ENCODE measurements at regions of chr4 and their contacts with region 1.

Region 1: GRCh38 chr4:83252782-83253405 is 31.7 kb downstream of the COQ2 start:
- DNase-seq: peak; percentile 81
- H3K4me3 ChIP-seq: no peak overlapping the region
- H3K27ac ChIP-seq: no peak overlapping the region
- H3K4me1 ChIP-seq: peaks cover 32% of the 10 kb centered on the region
- H3K27me3 ChIP-seq: no peaks in the 10 kb centered on the region
- CTCF ChIP-seq: peak; percentile 74 to 84
- POLR2A ChIP-seq: no peak

Region 2: GRCh38 chr4:82739316-82740179 is 513.3 kb before region 1 on chr4:
- CTCF ChIA-PET with region 1: no interaction called
- POLR2A ChIA-PET with region 1: no interaction called
- dilution Hi-C with region 1: no loop called
- intact Hi-C with region 1: no loop called
- DNase-seq: peak; percentile 82
- H3K4me3 ChIP-seq: no peak overlapping the region
- H3K27ac ChIP-seq: no peak overlapping the region
- H3K4me1 ChIP-seq: no peaks in the 10 kb centered on the region
- H3K27me3 ChIP-seq: no peaks in the 10 kb centered on the region
- CTCF ChIP-seq: peak; percentile 99 to 100
- POLR2A ChIP-seq: no peak

Region 3: DNA sequence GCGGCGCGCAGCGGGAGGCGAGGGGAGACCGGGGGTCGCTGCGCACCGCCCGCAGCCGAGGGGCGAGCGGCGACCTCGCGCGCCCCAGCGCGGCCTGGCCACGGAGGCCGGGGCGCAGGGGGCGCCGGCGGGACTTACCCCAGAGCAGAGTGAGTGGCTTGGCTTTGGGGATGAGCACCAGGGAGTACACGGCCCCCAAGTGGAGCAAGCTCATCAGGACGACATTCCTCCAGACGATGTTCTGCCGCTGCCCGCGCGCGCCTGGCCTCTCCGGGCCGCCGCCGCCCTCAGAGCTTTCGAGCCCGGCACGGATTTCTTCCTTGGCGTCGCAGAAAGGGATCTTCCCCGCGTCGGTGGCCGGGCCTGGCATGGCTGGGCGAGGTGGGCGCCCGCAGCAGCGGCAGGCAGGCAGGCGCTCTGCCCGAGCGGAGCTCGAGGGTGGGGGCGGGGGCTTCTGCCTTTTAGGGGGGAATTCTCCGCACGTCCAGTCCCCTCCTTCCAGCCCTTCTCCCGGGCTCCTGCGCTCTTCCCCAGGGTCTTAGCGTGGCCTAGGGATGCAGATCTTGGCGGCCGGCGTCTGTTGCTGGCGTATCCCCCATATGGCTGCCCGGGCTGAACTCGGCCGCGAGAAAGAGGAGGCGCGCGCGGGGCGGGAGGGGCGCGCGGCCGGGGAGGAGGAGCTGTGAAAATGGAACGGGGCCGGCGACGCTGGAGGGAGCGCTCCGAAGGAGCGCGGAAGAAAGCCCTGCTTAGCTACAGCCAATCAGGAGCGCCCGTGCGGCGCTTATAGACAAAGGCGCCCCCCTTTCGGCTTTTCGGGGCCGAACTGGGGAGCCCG is 454.5 kb before region 1 on chr4 and contains the start of gene SCD5:
- CTCF ChIA-PET with region 1: no interaction called
- POLR2A ChIA-PET with region 1: no interaction called
- dilution Hi-C with region 1: no loop called
- intact Hi-C with region 1: loop called (anchors 10 kb)
- DNase-seq: peak; percentile 76
- H3K4me3 ChIP-seq: peak within 1 kb of the TSS; percentile 79 to 91 (median 82)
- H3K27ac ChIP-seq: peak within 1 kb of the TSS; percentile 8
- H3K4me1 ChIP-seq: peaks cover 18% of the 10 kb centered on the region
- H3K27me3 ChIP-seq: peaks cover 0 to 3% of the 10 kb centered on the region in 2 experiments
- CTCF ChIP-seq: no peak
- POLR2A ChIP-seq: no peak
- total RNA-seq, gene SCD5: 35.8 and 38.4 TPM in 2 replicates

Region 4: GRCh38 chr4:83054928-83055327 is 198.0 kb before region 1 on chr4:
- CTCF ChIA-PET with region 1: interaction called, 10 read pairs
- POLR2A ChIA-PET with region 1: no interaction called
- dilution Hi-C with region 1: no loop called
- intact Hi-C with region 1: loop called (anchors 2 kb)
- DNase-seq: peak; percentile 40
- H3K4me3 ChIP-seq: no peak overlapping the region
- H3K27ac ChIP-seq: no peak overlapping the region
- H3K4me1 ChIP-seq: no peaks in the 10 kb centered on the region
- H3K27me3 ChIP-seq: no peaks in the 10 kb centered on the region
- CTCF ChIP-seq: peak; percentile 11 to 17
- POLR2A ChIP-seq: no peak

Region 5: GRCh38 chr4:83110223-83110945 is 142.5 kb before region 1 on chr4:
- CTCF ChIA-PET with region 1: interaction called, 27 read pairs
- POLR2A ChIA-PET with region 1: no interaction called
- dilution Hi-C with region 1: no loop called
- intact Hi-C with region 1: loop called (anchors 1 kb)
- DNase-seq: peak; percentile 86
- H3K4me3 ChIP-seq: peak overlapping the region; percentile 48 to 78 (median 70)
- H3K27ac ChIP-seq: peak overlapping the region; percentile 71
- H3K4me1 ChIP-seq: peaks cover 13% of the 10 kb centered on the region
- H3K27me3 ChIP-seq: no peaks in the 10 kb centered on the region
- CTCF ChIP-seq: peak; percentile 72 to 87
- POLR2A ChIP-seq: peak; percentile 31

Region 6: DNA sequence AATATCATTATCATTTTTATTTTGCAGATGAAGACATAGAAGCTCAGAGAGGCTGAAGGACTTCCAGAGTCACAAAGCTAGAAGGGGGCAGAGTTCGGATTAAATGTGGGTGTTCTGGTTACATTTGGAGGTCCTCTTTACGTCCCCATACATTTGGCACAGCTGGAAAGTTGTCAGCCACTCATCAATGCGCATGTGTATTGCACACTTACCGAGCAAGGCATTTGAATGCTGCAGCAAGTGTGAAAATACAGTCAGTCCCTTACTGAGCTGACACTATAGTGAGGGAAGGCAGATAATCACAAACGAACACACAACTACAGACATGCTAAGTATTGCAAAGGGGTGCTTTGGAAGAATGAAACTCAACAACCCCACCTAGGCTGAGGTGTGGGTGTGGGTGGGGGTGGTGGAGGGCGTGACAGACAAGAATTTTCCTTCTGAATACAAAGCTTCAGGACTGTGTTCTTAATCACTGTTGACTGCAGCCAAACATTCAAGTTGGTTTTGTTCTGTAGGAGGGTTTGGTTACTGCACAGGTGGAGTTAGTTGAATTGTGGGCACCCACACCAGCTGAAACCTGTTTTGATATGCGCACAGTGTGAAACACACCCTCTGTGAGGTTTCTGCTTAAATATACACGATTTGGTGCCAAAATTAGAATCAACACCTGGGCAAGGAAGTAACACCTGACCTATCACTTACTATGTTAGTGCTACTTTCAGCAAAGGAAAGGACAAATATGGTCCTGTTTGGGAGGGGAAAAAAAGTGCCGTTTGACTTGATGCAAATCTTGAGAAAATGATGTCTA is 40.6 kb before region 1 on chr4:
- CTCF ChIA-PET with region 1: interaction called, 3 read pairs
- POLR2A ChIA-PET with region 1: interaction called, 6 read pairs
- dilution Hi-C with region 1: no loop called
- intact Hi-C with region 1: loop called (anchors 2 kb)
- DNase-seq: no peak
- H3K4me3 ChIP-seq: no peak overlapping the region
- H3K27ac ChIP-seq: no peak overlapping the region
- H3K4me1 ChIP-seq: no peaks in the 10 kb centered on the region
- H3K27me3 ChIP-seq: no peaks in the 10 kb centered on the region
- CTCF ChIP-seq: no peak
- POLR2A ChIP-seq: no peak

Region 7: GRCh38 chr4:83316459-83317165 is 63.7 kb after region 1 on chr4:
- CTCF ChIA-PET with region 1: no interaction called
- POLR2A ChIA-PET with region 1: no interaction called
- dilution Hi-C with region 1: no loop called
- intact Hi-C with region 1: no loop called
- DNase-seq: no peak
- H3K4me3 ChIP-seq: no peak overlapping the region
- H3K27ac ChIP-seq: no peak overlapping the region
- H3K4me1 ChIP-seq: peaks cover 7% of the 10 kb centered on the region
- H3K27me3 ChIP-seq: no peaks in the 10 kb centered on the region
- CTCF ChIP-seq: no peak
- POLR2A ChIP-seq: no peak